CD4-positive, alpha-beta memory T cell (primary cell): ENCODE measurements at regions of chr4 and their contacts with region 1.

Region 1: DNA sequence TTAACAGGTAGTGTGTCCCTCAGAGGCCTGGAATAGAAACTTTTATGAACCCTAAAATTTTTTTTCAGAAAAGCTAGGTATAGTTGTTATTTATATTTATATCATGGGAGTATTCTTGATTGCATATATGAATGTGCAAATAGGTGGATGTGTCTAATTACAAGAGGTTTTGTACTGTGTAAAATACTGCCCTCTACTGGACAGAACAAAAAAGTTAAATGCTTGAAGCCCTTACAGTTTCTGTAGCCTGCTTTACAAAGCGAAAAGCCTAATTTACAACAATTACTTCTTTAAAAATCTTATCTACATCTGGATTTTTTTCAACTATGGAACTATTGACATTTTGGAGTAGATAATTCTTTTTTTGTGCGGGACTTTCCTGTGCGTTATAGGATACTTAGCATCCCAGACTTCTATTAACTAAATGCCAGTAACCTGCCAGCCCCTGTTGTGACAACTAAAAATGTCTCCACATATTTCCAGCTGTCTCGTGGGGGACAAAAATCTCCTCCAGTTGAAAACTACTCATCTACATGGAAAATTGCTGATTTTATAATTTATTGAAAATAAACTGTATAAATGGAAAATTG is 35.1 kb downstream of the ENPEP start:
- DNase-seq: peak in 4 of 5 donors; percentile 46 to 55 (median 51)
- H3K4me3 ChIP-seq: no peak overlapping the region
- H3K4me3 Mint-ChIP-seq: no peak overlapping the region
- H3K27ac ChIP-seq: no peak overlapping the region
- H3K27ac Mint-ChIP-seq: no peak overlapping the region
- H3K4me1 ChIP-seq: peaks cover 11% of the 10 kb centered on the region
- H3K4me1 Mint-ChIP-seq: peaks cover 7 to 10% (median 9%) of the 10 kb centered on the region in 4 donors
- H3K27me3 ChIP-seq: no peaks in the 10 kb centered on the region
- H3K27me3 Mint-ChIP-seq: peaks cover 0 to 3% of the 10 kb centered on the region in 2 donors

Region 2: GRCh38 chr4:109998867-109999584 is 512.0 kb before region 1 on chr4:
- CTCF ChIA-PET with region 1: interaction called, 733 read pairs
- POLR2A ChIA-PET with region 1: no interaction called
- intact Hi-C with region 1: loop called (anchors 1 kb)
- DNase-seq: peak in 4 of 5 donors; percentile 63 to 66 (median 65)
- H3K4me3 ChIP-seq: no peak overlapping the region
- H3K4me3 Mint-ChIP-seq: no peak overlapping the region
- H3K27ac ChIP-seq: no peak overlapping the region
- H3K27ac Mint-ChIP-seq: no peak overlapping the region
- H3K4me1 ChIP-seq: no peaks in the 10 kb centered on the region
- H3K4me1 Mint-ChIP-seq: peaks cover 1 to 8% (median 6%) of the 10 kb centered on the region in 4 donors
- H3K27me3 ChIP-seq: no peaks in the 10 kb centered on the region
- H3K27me3 Mint-ChIP-seq: peaks cover 9 to 11% of the 10 kb centered on the region in 2 donors

Region 3: GRCh38 chr4:110310795-110311194 is 200.3 kb before region 1 on chr4:
- CTCF ChIA-PET with region 1: no interaction called
- POLR2A ChIA-PET with region 1: no interaction called
- intact Hi-C with region 1: no loop called
- DNase-seq: no peak
- H3K4me3 ChIP-seq: no peak overlapping the region
- H3K4me3 Mint-ChIP-seq: no peak overlapping the region
- H3K27ac ChIP-seq: no peak overlapping the region
- H3K27ac Mint-ChIP-seq: no peak overlapping the region
- H3K4me1 ChIP-seq: no peaks in the 10 kb centered on the region
- H3K4me1 Mint-ChIP-seq: peaks cover 0 to 3% (median 0%) of the 10 kb centered on the region in 4 donors
- H3K27me3 ChIP-seq: no peaks in the 10 kb centered on the region
- H3K27me3 Mint-ChIP-seq: peaks cover 4 to 15% of the 10 kb centered on the region in 2 donors

Region 4: GRCh38 chr4:110449947-110450346 is 61.1 kb before region 1 on chr4:
- CTCF ChIA-PET with region 1: no interaction called
- POLR2A ChIA-PET with region 1: no interaction called
- intact Hi-C with region 1: no loop called
- DNase-seq: no peak
- H3K4me3 ChIP-seq: no peak overlapping the region
- H3K4me3 Mint-ChIP-seq: no peak overlapping the region
- H3K27ac ChIP-seq: no peak overlapping the region
- H3K27ac Mint-ChIP-seq: no peak overlapping the region
- H3K4me1 ChIP-seq: no peaks in the 10 kb centered on the region
- H3K4me1 Mint-ChIP-seq: no peaks in the 10 kb centered on the region
- H3K27me3 ChIP-seq: no peaks in the 10 kb centered on the region
- H3K27me3 Mint-ChIP-seq: peaks cover 0 to 9% of the 10 kb centered on the region in 2 donors

Region 5: DNA sequence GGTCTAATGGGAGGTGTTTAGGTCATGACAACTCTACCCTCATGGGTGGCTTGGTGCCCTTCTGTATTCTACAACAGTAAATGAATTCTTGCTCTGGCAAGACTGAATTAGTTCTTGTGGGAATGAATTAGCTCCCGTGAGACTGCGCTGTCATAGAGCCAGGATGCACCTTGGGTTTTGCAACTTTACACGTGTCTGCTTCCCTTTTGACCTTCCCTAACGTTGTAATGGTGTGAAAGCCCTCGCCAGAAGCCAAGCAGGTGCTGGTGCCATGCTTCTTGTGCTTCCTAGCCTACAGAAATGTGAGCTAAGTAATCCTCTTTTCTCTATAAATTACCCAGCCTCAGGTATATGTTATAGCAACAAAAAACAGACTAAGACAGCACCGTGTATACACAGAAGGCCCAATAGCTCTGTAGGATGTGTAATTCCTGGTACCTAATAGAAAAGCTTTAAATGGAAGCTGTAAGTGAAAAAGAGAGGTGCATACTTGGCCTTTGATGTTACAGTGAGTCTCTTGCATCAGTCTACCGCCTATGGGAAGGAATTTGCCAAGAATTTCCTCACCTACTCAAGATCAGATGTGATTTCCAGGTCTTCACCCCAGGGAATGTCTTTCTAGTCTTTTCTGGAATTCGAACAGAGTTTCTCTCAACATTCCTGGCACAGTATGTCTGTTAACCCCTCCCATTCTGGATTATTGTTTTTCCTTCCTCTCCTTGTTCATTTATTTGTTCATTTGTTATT is 38.3 kb before region 1 on chr4:
- CTCF ChIA-PET with region 1: no interaction called
- POLR2A ChIA-PET with region 1: no interaction called
- intact Hi-C with region 1: no loop called
- DNase-seq: no peak
- H3K4me3 ChIP-seq: no peak overlapping the region
- H3K4me3 Mint-ChIP-seq: no peak overlapping the region
- H3K27ac ChIP-seq: no peak overlapping the region
- H3K27ac Mint-ChIP-seq: no peak overlapping the region
- H3K4me1 ChIP-seq: no peaks in the 10 kb centered on the region
- H3K4me1 Mint-ChIP-seq: no peaks in the 10 kb centered on the region
- H3K27me3 ChIP-seq: no peaks in the 10 kb centered on the region
- H3K27me3 Mint-ChIP-seq: peaks cover 4 to 18% of the 10 kb centered on the region in 2 donors